Activated naive CD4-positive, alpha-beta T cell treated with anti-CD3 and anti-CD28 coated beads for 36 hours (primary cell): ENCODE measurements at regions of chr4 and their contacts with region 1.

Region 1: DNA sequence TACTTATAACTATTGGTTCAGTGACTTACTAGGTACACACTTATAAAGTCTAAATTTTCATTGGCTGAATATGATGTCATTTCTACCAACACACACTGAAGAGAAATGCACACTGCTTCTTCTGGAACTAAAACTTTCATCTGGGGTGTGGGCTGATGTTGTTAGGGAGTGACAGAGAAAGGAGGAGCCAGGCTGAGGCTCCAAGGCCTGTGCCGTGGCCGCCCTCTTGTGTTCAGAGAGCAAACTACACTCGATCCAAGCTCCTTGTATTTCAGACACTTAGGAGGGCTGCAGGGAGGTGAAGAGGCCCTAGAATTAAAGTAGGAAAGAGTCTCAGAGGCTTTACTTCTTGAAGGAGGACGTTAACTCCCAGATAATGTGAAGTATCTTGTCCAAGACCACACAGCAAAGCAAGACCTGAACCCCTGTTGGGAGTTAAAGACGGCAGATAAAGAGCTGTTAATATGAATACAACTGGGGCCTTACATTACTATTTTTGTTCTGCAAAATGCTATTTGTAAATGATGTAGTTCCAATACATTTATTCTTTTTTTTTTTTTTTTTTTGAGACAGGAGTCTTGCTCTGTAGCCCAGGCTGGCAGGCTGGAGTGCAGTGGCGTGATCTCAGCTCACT is 137.5 kb downstream of the AFAP1 start:
- DNase-seq: peak; percentile 92
- H3K4me3 Mint-ChIP-seq: no peak overlapping the region
- H3K27ac Mint-ChIP-seq: peak overlapping the region; percentile 65
- H3K4me1 Mint-ChIP-seq: peaks cover 18% of the 10 kb centered on the region
- H3K27me3 Mint-ChIP-seq: no peaks in the 10 kb centered on the region

Region 2: DNA sequence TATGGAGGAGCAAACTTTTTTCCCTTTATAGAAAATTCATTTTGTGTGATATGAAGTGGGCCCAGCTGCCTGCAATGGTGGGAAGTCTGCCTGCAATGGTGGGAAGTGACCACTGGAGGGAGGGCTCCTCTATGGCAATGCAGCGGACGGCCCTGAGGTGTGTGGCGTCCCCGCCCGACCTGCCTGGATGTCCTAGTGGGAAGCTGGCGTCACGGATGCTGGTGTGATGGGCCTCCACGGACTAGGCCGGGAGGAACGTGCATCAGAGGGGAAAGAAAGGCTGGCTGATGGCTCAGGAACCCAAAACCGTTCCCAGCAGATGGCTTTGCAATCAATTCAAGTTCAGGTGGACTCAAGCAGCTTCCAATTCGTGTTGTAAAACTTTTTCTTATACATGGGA is 40.5 kb before region 1 on chr4:
- CTCF ChIA-PET with region 1: interaction called, 77 read pairs
- intact Hi-C with region 1: loop called (anchors 1 kb)
- DNase-seq: peak; percentile 69
- H3K4me3 Mint-ChIP-seq: no peak overlapping the region
- H3K27ac Mint-ChIP-seq: peak overlapping the region; percentile 76
- H3K4me1 Mint-ChIP-seq: peaks cover 39% of the 10 kb centered on the region
- H3K27me3 Mint-ChIP-seq: no peaks in the 10 kb centered on the region

Region 3: GRCh38 chr4:7815562-7815961 is 13.4 kb after region 1 on chr4:
- CTCF ChIA-PET with region 1: interaction called, 10 read pairs
- intact Hi-C with region 1: no loop called
- DNase-seq: no peak
- H3K4me3 Mint-ChIP-seq: no peak overlapping the region
- H3K27ac Mint-ChIP-seq: no peak overlapping the region
- H3K4me1 Mint-ChIP-seq: peaks cover 2% of the 10 kb centered on the region
- H3K27me3 Mint-ChIP-seq: no peaks in the 10 kb centered on the region

Region 4: DNA sequence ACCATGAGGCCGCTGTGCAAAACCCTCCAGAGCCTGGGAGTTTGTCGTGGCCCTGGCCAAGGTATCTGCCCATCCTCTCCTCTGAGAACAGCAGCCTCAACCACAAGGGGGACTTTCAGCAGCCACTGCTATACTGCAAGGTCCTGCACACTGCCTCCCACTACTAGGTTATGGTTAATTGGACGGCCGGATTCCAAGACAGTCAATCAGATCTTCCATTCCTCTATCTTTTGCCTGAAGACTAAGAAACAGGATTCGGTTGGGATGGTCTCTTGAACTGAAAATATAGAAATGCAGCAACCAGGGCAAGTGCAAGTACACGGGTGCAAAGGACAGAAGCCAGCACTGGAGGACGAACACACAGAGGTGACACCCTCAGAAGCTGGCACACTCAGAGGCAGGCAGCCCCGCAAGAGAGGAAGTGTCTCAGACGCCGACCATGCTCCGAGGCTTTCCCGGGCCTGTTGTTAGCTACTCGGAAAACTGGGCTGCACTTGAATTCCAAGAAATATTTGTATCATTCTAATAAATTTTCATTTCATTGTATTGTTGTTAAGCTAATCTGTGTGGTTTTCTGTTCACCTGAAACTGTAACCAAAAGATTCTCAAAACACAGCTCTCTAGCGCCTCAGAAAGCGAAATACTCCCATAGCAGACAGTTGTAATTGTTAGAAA is 74.1 kb after region 1 on chr4:
- CTCF ChIA-PET with region 1: interaction called, 24 read pairs
- intact Hi-C with region 1: loop called (anchors 1 kb)
- DNase-seq: peak; percentile 45
- H3K4me3 Mint-ChIP-seq: peak overlapping the region; percentile 54
- H3K27ac Mint-ChIP-seq: peak overlapping the region; percentile 74
- H3K4me1 Mint-ChIP-seq: peaks cover 49% of the 10 kb centered on the region
- H3K27me3 Mint-ChIP-seq: no peaks in the 10 kb centered on the region

Region 5: GRCh38 chr4:7939377-7940108 is 137.3 kb after region 1 on chr4 and contains the start of gene AFAP1:
- CTCF ChIA-PET with region 1: interaction called, 18 read pairs
- intact Hi-C with region 1: no loop called
- DNase-seq: peak; percentile 86
- H3K4me3 Mint-ChIP-seq: peak within 1 kb of the TSS; percentile 69
- H3K27ac Mint-ChIP-seq: no peak within 1 kb of the TSS
- H3K4me1 Mint-ChIP-seq: peaks cover 33% of the 10 kb centered on the region
- H3K27me3 Mint-ChIP-seq: no peaks in the 10 kb centered on the region
- total RNA-seq, gene AFAP1: 26.7 to 28.8 TPM

Region 6: DNA sequence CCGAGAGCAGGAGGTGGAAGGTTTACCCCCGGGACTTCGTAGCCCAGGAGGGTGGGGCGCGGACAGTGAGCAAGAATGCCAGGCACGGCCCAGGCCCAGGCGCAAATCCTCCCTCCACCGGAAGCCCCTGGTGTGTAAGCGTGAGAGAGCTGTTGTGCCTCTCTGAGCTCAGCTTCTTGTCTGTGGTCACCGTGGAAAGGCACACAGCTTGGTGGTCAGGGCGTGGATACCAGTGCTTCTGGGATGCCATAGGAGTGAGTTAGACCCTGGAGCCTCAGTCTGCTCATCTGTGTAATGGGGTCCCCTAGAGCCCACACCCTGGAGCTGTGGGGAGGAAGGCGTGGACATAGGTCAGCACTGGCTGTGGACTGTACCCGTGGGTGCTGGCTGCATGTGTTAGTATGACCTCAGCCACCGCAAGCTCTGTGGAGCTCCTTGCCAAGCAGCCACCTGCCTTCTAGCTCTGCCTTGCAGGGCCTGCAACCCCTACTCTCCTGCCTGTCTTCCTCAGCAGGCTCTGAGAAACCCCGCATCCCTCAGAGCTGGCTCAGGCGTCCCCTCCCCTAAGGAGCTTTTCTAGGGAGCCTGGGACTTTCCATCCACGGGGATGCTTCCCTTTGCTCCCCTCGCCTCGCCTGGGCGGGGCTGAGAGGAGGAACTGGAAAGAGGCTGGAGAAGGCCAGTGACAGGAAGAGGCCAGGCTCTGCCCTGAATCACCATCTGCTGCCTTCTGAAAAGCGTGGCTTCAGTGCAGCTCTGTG is 165.5 kb after region 1 on chr4:
- CTCF ChIA-PET with region 1: interaction called, 10 read pairs
- intact Hi-C with region 1: loop called (anchors 1 kb)
- DNase-seq: no peak
- H3K4me3 Mint-ChIP-seq: no peak overlapping the region
- H3K27ac Mint-ChIP-seq: peak overlapping the region; percentile 74
- H3K4me1 Mint-ChIP-seq: peaks cover 62% of the 10 kb centered on the region
- H3K27me3 Mint-ChIP-seq: no peaks in the 10 kb centered on the region